Caco-2 (cell line): ENCODE measurements at regions of chr7 and their contacts with region 1.

Region 1: DNA sequence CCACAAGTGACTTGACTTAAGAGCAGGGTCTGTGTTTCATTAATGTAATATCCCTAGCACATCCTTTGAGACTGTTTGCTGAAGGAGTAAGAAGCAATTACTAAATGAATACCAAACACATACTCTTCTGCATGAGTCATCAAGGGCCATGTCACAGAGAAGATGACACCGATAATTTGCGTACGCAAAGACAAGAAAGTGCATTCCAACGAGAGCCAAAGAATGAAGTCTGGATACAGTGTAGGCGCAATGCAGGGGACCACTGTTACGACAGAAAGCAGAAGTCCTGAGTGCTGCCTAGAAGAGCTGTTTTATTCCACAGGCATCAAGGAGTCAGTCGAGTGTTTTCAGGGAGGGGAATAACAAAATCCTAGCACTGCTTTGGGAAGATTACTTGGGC is 62.7 kb downstream of the VPS41 start:
- DNase-seq: peak; percentile 48 to 60
- H3K4me3 ChIP-seq: no peak overlapping the region
- H3K4me3 Mint-ChIP-seq: peak overlapping the region; percentile 2
- H3K27ac Mint-ChIP-seq: peak overlapping the region; percentile 36
- H3K4me1 ChIP-seq: peaks cover 4% of the 10 kb centered on the region
- H3K4me1 Mint-ChIP-seq: peaks cover 9% of the 10 kb centered on the region
- H3K27me3 ChIP-seq: no peaks in the 10 kb centered on the region
- H3K27me3 Mint-ChIP-seq: no peaks in the 10 kb centered on the region
- CTCF ChIP-seq: no peak

Region 2: DNA sequence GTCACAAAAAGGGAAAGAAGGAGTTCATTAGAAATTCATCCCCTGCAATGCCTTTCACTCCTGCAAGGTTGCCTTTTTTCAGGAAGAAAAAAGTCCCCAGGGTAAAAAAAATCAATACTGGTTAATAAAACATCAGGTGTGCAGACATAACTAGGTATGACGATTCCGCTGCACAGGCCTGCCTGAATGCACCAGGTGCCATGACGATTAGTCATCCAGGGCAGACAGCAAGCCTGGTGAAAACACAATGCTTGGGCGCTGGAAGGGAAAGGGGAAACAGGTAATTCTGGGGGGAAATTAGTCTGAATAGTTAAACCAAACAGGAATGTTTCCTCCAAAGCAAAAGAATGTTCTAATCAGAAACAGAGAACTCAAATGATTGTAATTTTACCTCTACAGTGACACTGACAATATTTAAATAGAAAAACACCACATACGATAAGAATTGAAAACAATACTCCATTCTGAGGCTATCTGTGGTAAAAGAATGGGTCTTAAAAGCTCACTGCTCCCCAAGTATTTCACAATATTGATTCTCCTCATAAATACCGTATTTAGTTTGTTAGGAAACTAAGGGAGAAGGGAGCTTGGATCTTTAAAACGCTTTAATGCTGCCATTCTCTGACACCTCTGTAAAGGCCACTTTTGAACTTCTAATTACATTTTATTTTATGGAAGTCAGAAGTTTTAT is 17.5 kb after region 1 on chr7:
- CTCF ChIA-PET with region 1: no interaction called
- POLR2A ChIA-PET with region 1: no interaction called
- intact Hi-C with region 1: loop called (anchors 1 kb)
- DNase-seq: peak; percentile 72 to 78
- H3K4me3 ChIP-seq: no peak overlapping the region
- H3K4me3 Mint-ChIP-seq: peak overlapping the region; percentile 65
- H3K27ac Mint-ChIP-seq: peak overlapping the region; percentile 69
- H3K4me1 ChIP-seq: peaks cover 20% of the 10 kb centered on the region
- H3K4me1 Mint-ChIP-seq: peaks cover 7% of the 10 kb centered on the region
- H3K27me3 ChIP-seq: no peaks in the 10 kb centered on the region
- H3K27me3 Mint-ChIP-seq: no peaks in the 10 kb centered on the region
- CTCF ChIP-seq: no peak

Region 3: GRCh38 chr7:38889861-38890432 is 43.7 kb after region 1 on chr7:
- CTCF ChIA-PET with region 1: no interaction called
- POLR2A ChIA-PET with region 1: no interaction called
- intact Hi-C with region 1: no loop called
- DNase-seq: no peak
- H3K4me3 ChIP-seq: no peak overlapping the region
- H3K4me3 Mint-ChIP-seq: no peak overlapping the region
- H3K27ac Mint-ChIP-seq: no peak overlapping the region
- H3K4me1 ChIP-seq: no peaks in the 10 kb centered on the region
- H3K4me1 Mint-ChIP-seq: peaks cover 8% of the 10 kb centered on the region
- H3K27me3 ChIP-seq: no peaks in the 10 kb centered on the region
- H3K27me3 Mint-ChIP-seq: no peaks in the 10 kb centered on the region
- CTCF ChIP-seq: peak in 1 of 2 experiments; percentile 47